ENCODE measurements at regions of chr2 and their contacts with region 1.

Region 1: DNA sequence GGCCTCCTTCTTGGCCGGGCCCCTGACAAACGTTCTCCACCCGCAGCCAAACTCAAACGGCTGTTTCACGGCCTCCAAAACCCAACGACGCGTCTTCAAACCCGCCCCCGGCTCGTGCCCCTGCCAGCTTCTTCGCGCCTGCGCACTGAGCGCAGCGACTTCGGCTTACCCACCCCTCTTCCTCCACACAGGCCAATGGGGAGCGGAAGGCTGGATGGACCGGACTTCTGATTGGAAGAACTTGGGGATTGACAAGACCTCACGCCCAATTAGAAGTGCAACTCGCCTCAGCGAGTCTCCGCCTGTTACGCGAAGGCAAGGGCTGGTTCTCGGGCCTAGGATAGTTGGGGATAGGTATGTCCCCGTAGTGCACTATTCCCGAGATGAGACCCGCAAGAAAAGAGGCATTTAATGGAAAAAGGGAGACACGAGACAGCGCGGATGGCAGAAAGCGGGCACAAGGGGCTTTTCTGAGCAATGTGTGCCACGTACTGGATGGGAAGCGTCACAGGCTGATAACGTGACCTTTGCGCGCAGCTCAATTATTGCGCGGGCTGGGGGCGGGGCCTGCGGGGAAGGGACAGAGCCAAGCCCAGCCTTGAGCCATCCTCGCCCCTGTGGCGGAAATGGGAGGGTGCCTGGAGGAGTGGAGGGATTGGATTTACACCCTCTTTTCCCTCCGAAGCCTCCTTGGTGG is at the start of gene LAPTM4A:
- DNase-seq: peak; percentile 99
- H3K4me3 Mint-ChIP-seq: no peak within 1 kb of the TSS
- H3K27ac Mint-ChIP-seq: no peak within 1 kb of the TSS
- H3K4me1 Mint-ChIP-seq: peaks cover 28% of the 10 kb centered on the region
- H3K27me3 Mint-ChIP-seq: peaks cover 11% of the 10 kb centered on the region
- total RNA-seq, gene LAPTM4A: 26.7 to 29.0 TPM

Region 2: DNA sequence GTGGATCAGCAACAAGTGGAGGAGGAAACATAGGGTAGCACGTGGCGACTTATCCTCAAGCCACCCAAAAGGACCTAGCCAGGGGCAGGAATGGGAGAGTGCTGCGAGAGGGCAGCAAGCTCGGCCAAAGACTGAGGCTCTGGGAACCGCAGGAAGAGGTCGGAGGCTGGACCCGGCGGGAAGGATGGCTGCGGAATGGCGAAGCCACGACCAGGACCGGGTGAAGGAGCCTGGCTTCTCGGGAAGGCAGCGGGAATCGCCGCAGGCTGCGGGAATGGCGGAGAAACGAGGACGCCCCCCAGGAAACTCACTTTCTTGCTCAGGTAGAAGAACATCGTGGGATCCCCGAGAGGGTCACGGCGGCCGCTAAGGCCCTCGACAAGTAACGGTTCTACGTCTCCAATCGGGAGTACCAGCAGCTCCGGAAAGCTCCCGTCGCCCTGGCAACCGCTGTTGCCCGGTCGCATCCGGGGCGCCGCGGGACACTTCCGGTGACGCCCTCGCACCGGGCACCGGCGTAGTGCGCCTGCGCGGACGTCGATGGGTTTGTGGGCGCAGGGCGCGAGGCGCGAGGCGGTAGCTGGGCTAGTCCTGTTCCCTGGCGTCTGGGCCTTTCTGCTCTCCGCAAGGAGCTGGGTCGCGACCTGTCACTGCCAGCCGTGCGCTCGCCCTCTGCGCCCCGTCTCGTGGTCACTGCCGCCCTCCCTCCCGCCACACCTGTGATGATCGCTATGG is 61.8 kb before region 1 on chr2 and contains the start of gene WDR35:
- CTCF ChIA-PET with region 1: no interaction called
- POLR2A ChIA-PET with region 1: interaction called, 5 read pairs
- intact Hi-C with region 1: loop called (anchors 1 kb)
- DNase-seq: peak; percentile 94
- H3K4me3 Mint-ChIP-seq: peak within 1 kb of the TSS; percentile 90
- H3K27ac Mint-ChIP-seq: peak within 1 kb of the TSS; percentile 74
- H3K4me1 Mint-ChIP-seq: peaks cover 23% of the 10 kb centered on the region
- H3K27me3 Mint-ChIP-seq: peaks cover 9% of the 10 kb centered on the region
- total RNA-seq, gene WDR35: 6.0 to 7.1 TPM

Region 3: GRCh38 chr2:20097879-20098714 is 46.4 kb after region 1 on chr2:
- CTCF ChIA-PET with region 1: no interaction called
- POLR2A ChIA-PET with region 1: no interaction called
- intact Hi-C with region 1: loop called (anchors 2 kb)
- DNase-seq: peak; percentile 87
- H3K4me3 Mint-ChIP-seq: no peak overlapping the region
- H3K27ac Mint-ChIP-seq: no peak overlapping the region
- H3K4me1 Mint-ChIP-seq: peaks cover 2% of the 10 kb centered on the region
- H3K27me3 Mint-ChIP-seq: peaks cover 1% of the 10 kb centered on the region

Region 4: GRCh38 chr2:20350753-20351554 is 299.3 kb after region 1 on chr2 and contains the start of gene PUM2:
- CTCF ChIA-PET with region 1: no interaction called
- POLR2A ChIA-PET with region 1: no interaction called
- intact Hi-C with region 1: loop called (anchors 1 kb)
- DNase-seq: peak; percentile 97
- H3K4me3 Mint-ChIP-seq: no peak within 1 kb of the TSS
- H3K27ac Mint-ChIP-seq: peak within 1 kb of the TSS; percentile 93
- H3K4me1 Mint-ChIP-seq: peaks cover 31% of the 10 kb centered on the region
- H3K27me3 Mint-ChIP-seq: no peaks in the 10 kb centered on the region
- total RNA-seq, gene PUM2: 122 TPM